ENCODE measurements at regions of chr16 and their contacts with region 1.

Region 1: GRCh38 chr16:14501331-14502255 is 128.5 kb downstream of the PARN start:
- DNase-seq: peak; percentile 90
- H3K4me3 ChIP-seq: no peak overlapping the region
- H3K27ac ChIP-seq: peak overlapping the region; percentile 79
- H3K27me3 ChIP-seq: no peaks in the 10 kb centered on the region
- CTCF ChIP-seq: no peak

Region 2: GRCh38 chr16:13935408-13935807 is 566.2 kb before region 1 on chr16:
- in situ Hi-C with region 1: loop called (anchors 25 kb)
- DNase-seq: no peak
- H3K4me3 ChIP-seq: no peak overlapping the region
- H3K27ac ChIP-seq: no peak overlapping the region
- H3K27me3 ChIP-seq: no peaks in the 10 kb centered on the region
- CTCF ChIP-seq: peak; percentile 76

Measured in brain microvascular endothelial cell (primary cell).